Panc1 (cell line): ENCODE measurements at regions of chr18 and their contacts with region 1.

Region 1: DNA sequence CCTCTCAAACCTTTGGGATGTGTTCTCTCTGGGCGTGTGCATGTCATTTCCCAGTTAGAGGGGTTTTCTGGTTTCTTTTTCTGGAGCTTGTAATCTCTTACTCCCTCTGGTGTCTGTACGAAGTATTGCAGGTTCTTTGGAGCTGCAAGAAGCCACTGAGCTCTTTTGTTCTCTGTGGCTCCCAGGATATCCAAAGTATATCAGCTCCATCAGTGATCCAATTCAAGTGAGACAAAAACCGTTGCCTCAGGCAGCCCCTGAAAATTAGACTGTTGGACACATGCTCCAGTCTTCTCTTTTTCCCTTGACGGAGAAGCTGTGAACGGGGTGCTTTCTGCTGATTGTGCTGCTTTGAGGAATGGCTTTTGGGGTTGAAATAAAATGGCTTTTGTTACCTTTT is 59.0 kb upstream of the LDLRAD4 start:
- DNase-seq: peak; percentile 43
- ATAC-seq: peak; percentile 63; the same call in 1 of the 2 replicates
- H3K4me3 ChIP-seq: no peak overlapping the region
- H3K27ac ChIP-seq: no peak overlapping the region
- H3K4me1 ChIP-seq: no peaks in the 10 kb centered on the region
- H3K27me3 ChIP-seq: no peaks in the 10 kb centered on the region
- CTCF ChIP-seq: peak; percentile 86

Region 2: DNA sequence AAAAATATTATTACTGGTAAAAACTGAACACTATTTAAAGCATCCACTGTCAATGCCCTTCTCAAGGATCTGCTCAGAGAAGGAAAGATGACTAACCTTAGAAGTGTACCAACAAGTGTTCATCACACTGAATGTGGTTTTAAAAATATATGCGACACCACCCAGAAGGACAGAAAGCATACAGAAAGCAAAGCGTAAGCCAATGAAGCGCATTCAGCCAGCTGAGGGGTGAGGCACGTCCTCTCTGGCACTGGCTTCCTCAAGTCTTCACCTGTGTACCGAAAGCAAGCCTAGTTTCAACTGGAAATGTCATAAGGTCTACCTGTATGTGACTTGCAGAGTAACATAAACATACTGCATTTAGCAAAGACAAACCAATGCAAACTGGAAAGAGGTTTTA is 368.0 kb before region 1 on chr18:
- CTCF ChIA-PET with region 1: no interaction called
- POLR2A ChIA-PET with region 1: interaction called, 13 read pairs
- in situ Hi-C with region 1: no loop called
- intact Hi-C with region 1: no loop called
- DNase-seq: no peak
- ATAC-seq: no peak
- H3K4me3 ChIP-seq: no peak overlapping the region
- H3K27ac ChIP-seq: no peak overlapping the region
- H3K4me1 ChIP-seq: no peaks in the 10 kb centered on the region
- H3K27me3 ChIP-seq: no peaks in the 10 kb centered on the region
- CTCF ChIP-seq: no peak

Region 3: GRCh38 chr18:12990967-12991838 is 168.4 kb before region 1 on chr18 and contains the start of gene CEP192:
- CTCF ChIA-PET with region 1: interaction called, 4 read pairs
- POLR2A ChIA-PET with region 1: no interaction called
- in situ Hi-C with region 1: no loop called
- intact Hi-C with region 1: loop called (anchors 5 kb)
- DNase-seq: peak; percentile 84
- ATAC-seq: peak; percentile 96
- H3K4me3 ChIP-seq: peak within 1 kb of the TSS; percentile 86 to 98
- H3K27ac ChIP-seq: peak within 1 kb of the TSS; percentile 96
- H3K4me1 ChIP-seq: peaks cover 17% of the 10 kb centered on the region
- H3K27me3 ChIP-seq: no peaks in the 10 kb centered on the region
- CTCF ChIP-seq: 0 out of 2 replicates have a peak, but pooled peaks have one; percentile 15
- total RNA-seq, gene CEP192: 27.2 TPM

Region 4: DNA sequence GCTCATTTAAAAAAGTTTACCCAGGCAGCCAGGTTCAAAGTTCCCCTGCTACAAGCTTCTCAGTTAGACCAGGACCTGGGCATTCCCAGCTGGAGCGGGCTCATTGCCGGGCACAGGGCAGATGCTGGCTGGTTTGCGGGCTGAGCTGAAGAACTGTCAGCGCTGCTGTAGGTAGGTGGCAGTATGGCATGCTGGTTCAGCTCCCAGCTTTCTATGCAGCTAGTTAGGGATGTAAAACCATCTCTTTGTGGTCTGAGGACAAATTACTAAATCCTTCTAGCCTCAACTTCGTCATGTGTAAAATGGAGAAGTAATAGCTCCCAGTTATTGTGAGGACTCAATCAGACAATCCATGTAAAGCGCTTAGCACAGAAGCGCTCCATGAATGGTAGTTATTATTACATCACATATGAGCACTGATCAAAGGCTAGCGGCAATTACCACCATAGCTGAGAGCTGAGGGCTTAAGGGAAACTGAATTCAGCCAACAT is 56.6 kb after region 1 on chr18:
- CTCF ChIA-PET with region 1: no interaction called
- POLR2A ChIA-PET with region 1: no interaction called
- in situ Hi-C with region 1: no loop called
- intact Hi-C with region 1: loop called (anchors 10 kb)
- DNase-seq: peak; percentile 33
- ATAC-seq: peak; percentile 86
- H3K4me3 ChIP-seq: no peak overlapping the region
- H3K27ac ChIP-seq: no peak overlapping the region
- H3K4me1 ChIP-seq: no peaks in the 10 kb centered on the region; the same call in 1 of the 2 replicates
- H3K27me3 ChIP-seq: peaks cover 30% of the 10 kb centered on the region
- CTCF ChIP-seq: peak; percentile 81